WTC11 (cell line): ENCODE measurements at regions of chr1 and their contacts with region 1.

Region 1: GRCh38 chr1:72037745-72038343 is 244.5 kb downstream of the NEGR1 start:
- DNase-seq: peak; percentile 34
- ATAC-seq: peak; percentile 16; the same call in 1 of the 2 replicates
- H3K4me3 Mint-ChIP-seq: no peak overlapping the region
- H3K27ac Mint-ChIP-seq: no peak overlapping the region
- H3K4me1 Mint-ChIP-seq: peaks cover 20% of the 10 kb centered on the region
- H3K27me3 Mint-ChIP-seq: no peaks in the 10 kb centered on the region
- CTCF ChIP-seq: peak; percentile 39

Region 2: GRCh38 chr1:71919811-71920509 is 117.9 kb before region 1 on chr1:
- CTCF ChIA-PET with region 1: interaction called, 10 read pairs
- POLR2A ChIA-PET with region 1: no interaction called
- DNase-seq: no peak
- ATAC-seq: peak; percentile 87
- H3K4me3 Mint-ChIP-seq: no peak overlapping the region
- H3K27ac Mint-ChIP-seq: peak overlapping the region; percentile 22; the same call in 1 of the 2 replicates
- H3K4me1 Mint-ChIP-seq: peaks cover 19% of the 10 kb centered on the region
- H3K27me3 Mint-ChIP-seq: no peaks in the 10 kb centered on the region
- CTCF ChIP-seq: no peak

Region 3: GRCh38 chr1:71940261-71940660 is 97.6 kb before region 1 on chr1:
- CTCF ChIA-PET with region 1: no interaction called
- POLR2A ChIA-PET with region 1: no interaction called
- DNase-seq: no peak
- ATAC-seq: no peak
- H3K4me3 Mint-ChIP-seq: no peak overlapping the region
- H3K27ac Mint-ChIP-seq: no peak overlapping the region
- H3K4me1 Mint-ChIP-seq: no peaks in the 10 kb centered on the region
- H3K27me3 Mint-ChIP-seq: no peaks in the 10 kb centered on the region
- CTCF ChIP-seq: no peak

Region 4: DNA sequence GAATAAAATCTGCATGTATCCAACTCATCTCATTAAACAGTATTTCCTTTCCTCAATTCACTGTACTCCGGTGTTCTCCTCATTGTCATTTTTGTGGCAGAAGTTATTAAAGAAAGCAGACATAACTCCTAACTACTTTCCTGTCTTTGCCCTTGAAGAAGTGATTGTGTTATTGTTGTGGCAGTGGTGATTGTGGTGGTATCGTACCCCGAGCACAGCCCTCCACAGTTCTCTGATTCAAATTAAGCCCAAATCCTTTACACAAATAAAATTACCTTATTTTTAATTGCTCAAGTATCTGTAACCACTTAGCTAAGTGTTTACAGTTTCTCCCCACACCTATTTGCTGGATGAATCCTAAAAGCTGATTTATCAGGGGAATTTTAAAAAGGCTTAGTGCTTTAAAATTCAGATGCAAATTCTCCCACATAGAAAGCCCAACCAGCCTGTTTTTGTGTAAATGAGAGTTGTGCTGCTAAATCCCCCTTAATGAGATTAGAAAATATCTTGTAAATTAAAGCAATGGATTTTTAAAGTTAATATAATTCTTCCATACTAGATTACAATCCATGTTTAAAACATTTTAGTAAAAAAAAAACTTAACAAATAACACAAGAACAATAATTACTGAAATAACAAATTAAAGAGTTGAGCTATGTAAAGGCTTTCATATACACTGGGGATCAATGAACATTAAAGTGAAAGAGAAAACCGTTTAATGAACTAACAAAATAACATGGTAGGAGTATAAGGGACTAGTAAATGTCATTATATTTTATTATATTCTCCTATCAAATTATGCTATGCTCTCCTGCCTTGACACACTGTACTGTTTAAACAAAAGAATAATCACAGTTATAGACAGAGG is 14.5 kb before region 1 on chr1:
- CTCF ChIA-PET with region 1: interaction called, 10 read pairs
- POLR2A ChIA-PET with region 1: no interaction called
- DNase-seq: no peak
- ATAC-seq: peak; percentile 60
- H3K4me3 Mint-ChIP-seq: peak overlapping the region; percentile 41
- H3K27ac Mint-ChIP-seq: peak overlapping the region; percentile 97
- H3K4me1 Mint-ChIP-seq: peaks cover 26% of the 10 kb centered on the region
- H3K27me3 Mint-ChIP-seq: no peaks in the 10 kb centered on the region
- CTCF ChIP-seq: no peak